CD8-positive, alpha-beta T cell (primary cell): ENCODE measurements at regions of chr6 and their contacts with region 1.

Region 1: DNA sequence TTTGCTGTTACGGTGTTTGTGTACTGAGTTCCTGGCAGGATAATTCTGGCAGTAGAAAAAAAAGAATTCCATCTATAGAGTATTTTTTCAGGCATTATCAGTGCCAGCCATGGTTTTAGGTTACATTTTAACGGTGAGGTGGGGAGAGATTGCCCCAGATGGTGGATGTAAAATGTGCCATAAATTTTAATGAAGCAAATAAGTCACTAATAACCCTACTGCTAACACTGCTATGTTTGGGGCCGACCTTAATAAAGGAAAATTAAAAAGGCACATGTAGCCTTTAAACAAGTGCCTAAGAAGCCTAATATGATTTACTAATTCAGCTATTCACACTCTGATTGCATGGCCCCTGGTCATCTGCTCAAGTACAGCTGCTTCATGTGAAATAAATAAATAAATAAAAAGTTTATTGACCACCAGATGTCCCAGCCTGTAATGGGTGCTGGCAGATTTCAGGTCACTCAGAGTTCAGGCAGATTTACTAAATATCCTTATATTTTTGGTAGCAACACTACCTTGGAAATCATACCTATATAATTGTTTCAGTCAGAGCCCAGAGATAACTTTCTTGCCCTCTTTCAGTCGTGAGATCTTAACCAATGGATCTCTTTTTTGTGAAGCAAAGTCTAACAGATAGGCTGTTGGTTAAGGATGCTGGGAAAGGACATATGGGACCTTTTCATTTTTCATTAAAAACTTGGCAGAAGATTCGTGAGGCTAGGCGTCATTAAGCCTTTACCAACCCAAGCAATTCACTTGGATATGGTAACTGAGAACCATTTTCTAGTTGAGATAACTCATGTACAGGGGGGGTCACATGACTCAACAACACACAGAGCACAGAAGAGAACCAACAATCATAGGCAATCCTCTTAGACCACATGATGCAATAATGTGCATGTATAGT is 495.0 kb upstream of the NRSN1 start:
- DNase-seq: no peak
- ATAC-seq: no peak
- H3K4me3 ChIP-seq: no peak overlapping the region
- H3K4me3 Mint-ChIP-seq: no peak overlapping the region
- H3K27ac ChIP-seq: no peak overlapping the region
- H3K27ac Mint-ChIP-seq: no peak overlapping the region
- H3K4me1 ChIP-seq: no peaks in the 10 kb centered on the region
- H3K4me1 Mint-ChIP-seq: no peaks in the 10 kb centered on the region
- H3K27me3 ChIP-seq: no peaks in the 10 kb centered on the region
- H3K27me3 Mint-ChIP-seq: no peaks in the 10 kb centered on the region
- CTCF ChIP-seq: no peak

Region 2: GRCh38 chr6:23601811-23602340 is 29.1 kb before region 1 on chr6:
- CTCF ChIA-PET with region 1: no interaction called
- POLR2A ChIA-PET with region 1: no interaction called
- intact Hi-C with region 1: loop called in 1 of 2 experiments (anchors 1 kb)
- DNase-seq: no peak
- ATAC-seq: no peak
- H3K4me3 ChIP-seq: no peak overlapping the region
- H3K4me3 Mint-ChIP-seq: no peak overlapping the region
- H3K27ac ChIP-seq: no peak overlapping the region
- H3K27ac Mint-ChIP-seq: no peak overlapping the region
- H3K4me1 ChIP-seq: no peaks in the 10 kb centered on the region
- H3K4me1 Mint-ChIP-seq: no peaks in the 10 kb centered on the region
- H3K27me3 ChIP-seq: no peaks in the 10 kb centered on the region
- H3K27me3 Mint-ChIP-seq: no peaks in the 10 kb centered on the region
- CTCF ChIP-seq: no peak

Region 3: DNA sequence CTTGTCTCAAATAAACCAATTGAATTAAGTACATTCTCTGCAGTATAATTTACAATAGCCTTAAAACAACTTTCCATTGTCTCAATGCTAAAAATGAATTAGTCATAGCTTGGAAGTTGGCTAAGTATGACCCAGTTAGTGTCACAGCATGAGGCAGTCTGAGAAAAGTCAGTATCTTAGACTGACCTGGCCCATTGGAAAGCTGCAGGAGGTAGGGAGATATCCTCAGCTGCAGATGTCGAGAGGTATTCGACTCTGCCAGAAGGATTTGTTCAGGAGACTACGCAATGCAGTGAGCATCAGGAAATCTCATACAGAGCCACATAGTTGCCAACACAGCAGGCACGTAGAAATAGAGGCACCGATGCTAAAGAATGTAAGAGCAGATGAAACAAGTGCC is 144.1 kb after region 1 on chr6:
- CTCF ChIA-PET with region 1: no interaction called
- POLR2A ChIA-PET with region 1: no interaction called
- intact Hi-C with region 1: no loop called
- DNase-seq: no peak
- ATAC-seq: no peak
- H3K4me3 ChIP-seq: no peak overlapping the region
- H3K4me3 Mint-ChIP-seq: no peak overlapping the region
- H3K27ac ChIP-seq: no peak overlapping the region
- H3K27ac Mint-ChIP-seq: no peak overlapping the region
- H3K4me1 ChIP-seq: no peaks in the 10 kb centered on the region
- H3K4me1 Mint-ChIP-seq: no peaks in the 10 kb centered on the region
- H3K27me3 ChIP-seq: no peaks in the 10 kb centered on the region
- H3K27me3 Mint-ChIP-seq: no peaks in the 10 kb centered on the region
- CTCF ChIP-seq: no peak